Heart left ventricle (tissue), 16 donors: ENCODE measurements at regions of chr5 and their contacts with region 1.

Region 1: DNA sequence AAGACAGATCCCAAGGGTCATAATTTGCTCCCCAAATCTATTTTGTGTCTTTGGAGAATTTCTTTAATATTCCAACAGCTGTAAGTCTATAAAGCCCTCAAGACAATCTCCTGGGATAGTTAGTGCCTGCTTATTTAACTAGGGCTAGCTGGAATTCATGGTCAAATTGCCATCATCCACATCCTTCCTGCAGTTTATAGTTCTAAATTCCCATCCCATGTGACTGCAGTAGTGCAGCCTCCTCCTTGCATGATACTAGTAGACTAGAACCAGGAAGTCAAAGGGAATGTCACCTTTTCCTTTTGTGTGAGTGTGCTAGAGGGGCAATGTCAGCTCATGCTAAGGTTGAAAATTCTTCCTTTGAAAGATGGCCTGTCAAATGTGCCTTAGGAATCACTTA is 214.8 kb upstream of the PIK3R1 start:
- DNase-seq: no peak
- ATAC-seq: no peak
- H3K4me3 ChIP-seq: no peak overlapping the region
- H3K27ac ChIP-seq: peak overlapping the region in 1 of 12 donors; percentile 9
- H3K4me1 ChIP-seq: peaks cover 0 to 17% (median 4%) of the 10 kb centered on the region in 12 donors
- H3K27me3 ChIP-seq: no peaks in the 10 kb centered on the region
- CTCF ChIP-seq: no peak
- POLR2A ChIP-seq: no peak

Region 2: GRCh38 chr5:67954351-67954750 is 46.5 kb before region 1 on chr5:
- intact Hi-C with region 1: loop called in 1 of 10 experiments (anchors 2 kb)
- DNase-seq: no peak
- ATAC-seq: no peak
- H3K4me3 ChIP-seq: no peak overlapping the region
- H3K27ac ChIP-seq: no peak overlapping the region
- H3K4me1 ChIP-seq: peaks cover 0 to 6% (median 0%) of the 10 kb centered on the region in 12 donors
- H3K27me3 ChIP-seq: no peaks in the 10 kb centered on the region
- CTCF ChIP-seq: no peak
- POLR2A ChIP-seq: no peak